Psoas muscle (tissue), 8 donors: ENCODE measurements at regions of chr15 and their contacts with region 1.

Region 1: GRCh38 chr15:96115642-96116041 is 214.9 kb upstream of the NR2F2 start:
- DNase-seq: no peak
- ATAC-seq: no peak
- H3K4me3 ChIP-seq: no peak overlapping the region
- H3K27ac ChIP-seq: no peak overlapping the region
- H3K4me1 ChIP-seq: no peaks in the 10 kb centered on the region
- H3K27me3 ChIP-seq: no peaks in the 10 kb centered on the region
- CTCF ChIP-seq: no peak

Region 2: GRCh38 chr15:96296264-96296663 is 180.6 kb after region 1 on chr15:
- intact Hi-C with region 1: loop called in 1 of 2 experiments (anchors 10 kb)
- DNase-seq: no peak
- ATAC-seq: no peak
- H3K4me3 ChIP-seq: no peak overlapping the region
- H3K27ac ChIP-seq: no peak overlapping the region
- H3K4me1 ChIP-seq: no peaks in the 10 kb centered on the region
- H3K27me3 ChIP-seq: no peaks in the 10 kb centered on the region
- CTCF ChIP-seq: no peak